IMR-90 (cell line): ENCODE measurements at regions of chr4 and their contacts with region 1.

Region 1: GRCh38 chr4:71184195-71184781 is 154.5 kb upstream of the SLC4A4 start:
- DNase-seq: peak; percentile 75
- ATAC-seq: no peak
- H3K4me3 ChIP-seq: no peak overlapping the region
- H3K27ac ChIP-seq: no peak overlapping the region
- H3K4me1 ChIP-seq: no peaks in the 10 kb centered on the region
- H3K27me3 ChIP-seq: no peaks in the 10 kb centered on the region
- CTCF ChIP-seq: peak; percentile 66
- POLR2A ChIP-seq: no peak
- RAD21 ChIP-seq: peak; percentile 70

Region 2: DNA sequence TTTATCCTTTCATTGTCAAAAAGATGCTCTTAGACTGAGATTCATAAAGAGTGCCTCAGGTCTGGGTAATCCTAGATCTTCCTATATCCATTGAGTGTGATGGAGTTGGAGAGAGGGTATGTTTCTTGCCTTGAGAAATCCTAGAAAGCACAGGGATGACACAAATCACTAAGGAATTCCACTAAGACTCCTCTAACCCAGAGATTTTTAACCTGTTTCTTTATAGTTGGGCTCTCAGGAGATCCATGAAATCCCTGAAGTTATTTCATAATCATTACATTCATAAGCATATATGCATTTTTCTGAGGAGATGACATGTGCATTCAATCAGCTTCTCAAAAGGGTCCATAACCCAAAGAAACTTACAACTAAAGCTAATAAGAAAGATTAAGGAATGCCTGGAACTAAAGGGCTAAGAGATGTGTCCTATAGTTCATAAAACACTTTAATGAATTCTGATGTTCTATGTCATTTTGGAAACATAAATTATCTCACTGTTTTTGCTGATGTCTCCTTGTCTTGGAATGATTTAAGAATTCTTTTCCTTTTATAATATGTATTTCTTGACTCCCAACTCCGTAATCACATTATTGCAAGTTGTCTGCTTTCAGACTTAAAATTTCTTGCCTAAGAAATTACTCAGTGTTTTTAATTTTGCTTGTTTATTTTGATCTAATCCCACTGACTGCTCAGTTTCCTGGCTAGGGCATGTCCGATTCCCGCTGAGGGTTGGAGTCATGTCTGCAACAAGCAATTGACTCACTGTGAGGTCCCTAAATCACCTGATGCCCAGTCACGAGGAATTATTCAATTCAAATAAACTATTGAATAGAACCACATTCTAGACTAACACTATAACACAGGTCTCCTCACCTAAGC is 668.7 kb before region 1 on chr4:
- CTCF ChIA-PET with region 1: no interaction called
- POLR2A ChIA-PET with region 1: no interaction called
- dilution Hi-C with region 1: no loop called
- in situ Hi-C with region 1: no loop called
- intact Hi-C with region 1: no loop called
- DNase-seq: no peak
- ATAC-seq: no peak
- H3K4me3 ChIP-seq: no peak overlapping the region
- H3K27ac ChIP-seq: no peak overlapping the region
- H3K4me1 ChIP-seq: no peaks in the 10 kb centered on the region
- H3K27me3 ChIP-seq: no peaks in the 10 kb centered on the region
- CTCF ChIP-seq: no peak
- POLR2A ChIP-seq: no peak
- RAD21 ChIP-seq: no peak

Region 3: GRCh38 chr4:70651864-70652506 is 532.3 kb before region 1 on chr4:
- CTCF ChIA-PET with region 1: no interaction called
- POLR2A ChIA-PET with region 1: no interaction called
- dilution Hi-C with region 1: no loop called
- in situ Hi-C with region 1: no loop called
- intact Hi-C with region 1: loop called (anchors 1 kb)
- DNase-seq: peak; percentile 52
- ATAC-seq: peak; percentile 88
- H3K4me3 ChIP-seq: no peak overlapping the region; the same call in 1 of the 2 replicates
- H3K27ac ChIP-seq: no peak overlapping the region
- H3K4me1 ChIP-seq: peaks cover 2% of the 10 kb centered on the region; the same call in 1 of the 2 replicates
- H3K27me3 ChIP-seq: no peaks in the 10 kb centered on the region
- CTCF ChIP-seq: peak; percentile 63
- POLR2A ChIP-seq: no peak
- RAD21 ChIP-seq: peak; percentile 75

Region 4: GRCh38 chr4:70993181-70994068 is 190.9 kb before region 1 on chr4 and contains the start of gene DCK:
- CTCF ChIA-PET with region 1: no interaction called
- POLR2A ChIA-PET with region 1: no interaction called
- dilution Hi-C with region 1: no loop called
- in situ Hi-C with region 1: no loop called
- intact Hi-C with region 1: loop called (anchors 10 kb)
- DNase-seq: peak; percentile 90
- ATAC-seq: peak; percentile 95
- H3K4me3 ChIP-seq: peak within 1 kb of the TSS; percentile 87
- H3K27ac ChIP-seq: peak within 1 kb of the TSS; percentile 94
- H3K4me1 ChIP-seq: peaks cover 5% of the 10 kb centered on the region
- H3K27me3 ChIP-seq: no peaks in the 10 kb centered on the region
- CTCF ChIP-seq: no peak
- POLR2A ChIP-seq: peak; percentile 75
- RAD21 ChIP-seq: peak; percentile 25
- total RNA-seq, gene DCK: 7.0 and 14.4 TPM in 2 replicates

Region 5: DNA sequence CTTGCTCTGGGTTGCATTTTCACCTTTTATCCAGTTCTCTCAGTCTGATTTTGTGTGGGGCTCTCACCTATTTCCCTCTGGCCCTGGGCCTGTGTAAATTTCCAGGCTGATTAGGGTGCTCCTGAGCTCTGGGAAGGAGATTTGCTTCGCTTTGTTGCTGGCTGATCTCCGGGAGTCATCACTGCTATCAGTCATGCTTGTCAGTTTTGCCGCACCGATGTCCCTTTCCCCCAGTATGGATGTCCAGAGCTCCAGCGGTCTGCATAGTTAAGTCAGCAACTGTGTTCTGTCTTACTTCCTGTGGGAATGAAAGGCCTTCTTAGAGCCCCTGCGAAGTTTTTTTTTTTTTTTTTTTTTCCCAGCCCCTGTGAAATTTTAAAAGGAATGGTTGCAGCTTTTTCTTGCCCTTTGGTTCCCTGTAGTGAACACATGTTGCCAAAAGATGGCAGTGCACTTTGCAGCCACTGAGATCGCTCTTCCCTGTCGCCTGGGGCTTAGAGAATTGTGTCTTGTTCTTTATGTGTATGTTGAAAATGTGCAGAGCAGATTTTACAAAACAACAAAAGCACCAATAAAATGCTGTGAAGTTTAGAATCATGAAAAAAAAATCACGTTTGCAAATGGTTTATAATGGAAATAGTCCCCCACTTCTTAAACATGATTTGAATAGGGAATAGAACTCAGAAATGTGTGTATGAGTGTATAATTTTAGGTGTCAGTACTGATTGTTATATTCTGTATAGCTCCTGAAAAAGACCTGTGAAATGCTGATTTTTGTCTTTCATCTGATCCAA is 45.4 kb after region 1 on chr4:
- CTCF ChIA-PET with region 1: interaction called, 13 read pairs
- POLR2A ChIA-PET with region 1: no interaction called
- dilution Hi-C with region 1: no loop called
- in situ Hi-C with region 1: no loop called
- intact Hi-C with region 1: loop called (anchors 2 kb)
- DNase-seq: peak; percentile 81
- ATAC-seq: peak; percentile 56
- H3K4me3 ChIP-seq: no peak overlapping the region
- H3K27ac ChIP-seq: peak overlapping the region; percentile 57
- H3K4me1 ChIP-seq: peaks cover 19% of the 10 kb centered on the region
- H3K27me3 ChIP-seq: no peaks in the 10 kb centered on the region
- CTCF ChIP-seq: peak; percentile 75
- POLR2A ChIP-seq: no peak
- RAD21 ChIP-seq: peak; percentile 83

Region 6: DNA sequence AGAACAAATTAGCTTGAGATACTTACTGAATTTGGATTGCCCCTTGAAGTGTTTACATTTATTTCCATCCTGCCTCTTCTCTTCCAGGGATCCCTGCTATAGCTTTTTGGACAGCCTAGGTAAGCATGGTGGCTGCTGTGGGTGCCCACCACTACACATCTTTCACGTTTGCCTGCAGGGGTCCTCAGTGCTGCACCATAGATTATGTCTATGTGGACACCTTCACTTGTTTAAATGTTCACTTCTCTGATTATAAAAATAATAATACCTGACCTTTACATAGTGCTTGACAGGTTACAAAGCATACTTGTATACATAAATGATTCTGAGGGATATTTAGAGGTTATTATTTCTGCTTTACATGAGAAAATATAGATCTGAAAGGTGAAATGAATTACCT is 86.6 kb after region 1 on chr4:
- CTCF ChIA-PET with region 1: interaction called, 4 read pairs
- POLR2A ChIA-PET with region 1: no interaction called
- dilution Hi-C with region 1: no loop called
- in situ Hi-C with region 1: no loop called
- intact Hi-C with region 1: loop called (anchors 5 kb)
- DNase-seq: peak; percentile 45
- ATAC-seq: no peak
- H3K4me3 ChIP-seq: no peak overlapping the region
- H3K27ac ChIP-seq: no peak overlapping the region
- H3K4me1 ChIP-seq: peaks cover 14% of the 10 kb centered on the region
- H3K27me3 ChIP-seq: no peaks in the 10 kb centered on the region
- CTCF ChIP-seq: peak; percentile 52
- POLR2A ChIP-seq: no peak
- RAD21 ChIP-seq: peak; percentile 72

Region 7: DNA sequence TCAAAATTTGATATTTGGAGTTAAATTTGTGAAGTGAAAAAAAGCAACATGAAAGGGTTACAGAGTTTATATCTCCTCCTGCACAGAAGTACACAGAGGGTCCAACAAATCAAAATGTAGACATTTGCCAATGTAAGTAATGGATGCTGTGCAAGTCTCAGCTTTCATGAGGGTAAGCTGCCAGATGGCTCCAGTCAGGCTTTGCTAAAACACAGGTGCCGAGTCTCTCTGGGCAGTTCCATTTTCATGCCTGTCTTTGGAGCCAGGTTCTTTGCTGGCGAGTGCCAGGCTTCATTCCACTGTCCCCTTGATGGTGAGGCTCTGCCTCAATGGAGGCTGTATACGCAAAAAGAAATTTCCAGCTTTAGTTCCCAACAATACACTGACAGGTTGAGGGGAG is 182.5 kb after region 1 on chr4:
- CTCF ChIA-PET with region 1: no interaction called
- POLR2A ChIA-PET with region 1: no interaction called
- dilution Hi-C with region 1: no loop called
- in situ Hi-C with region 1: no loop called
- intact Hi-C with region 1: no loop called
- DNase-seq: no peak
- ATAC-seq: no peak
- H3K4me3 ChIP-seq: no peak overlapping the region
- H3K27ac ChIP-seq: no peak overlapping the region
- H3K4me1 ChIP-seq: no peaks in the 10 kb centered on the region
- H3K27me3 ChIP-seq: no peaks in the 10 kb centered on the region
- CTCF ChIP-seq: no peak
- POLR2A ChIP-seq: no peak
- RAD21 ChIP-seq: no peak

Region 8: GRCh38 chr4:71472946-71473345 is 288.7 kb after region 1 on chr4:
- CTCF ChIA-PET with region 1: no interaction called
- POLR2A ChIA-PET with region 1: no interaction called
- dilution Hi-C with region 1: no loop called
- in situ Hi-C with region 1: no loop called
- intact Hi-C with region 1: loop called (anchors 5 kb)
- DNase-seq: peak; percentile 89
- ATAC-seq: peak; percentile 74
- H3K4me3 ChIP-seq: no peak overlapping the region
- H3K27ac ChIP-seq: peak overlapping the region; percentile 77
- H3K4me1 ChIP-seq: peaks cover 12% of the 10 kb centered on the region
- H3K27me3 ChIP-seq: no peaks in the 10 kb centered on the region
- CTCF ChIP-seq: no peak
- POLR2A ChIP-seq: no peak
- RAD21 ChIP-seq: no peak